ENCODE measurements at regions of chr1 and their contacts with region 1.

Region 1: GRCh38 chr1:198556971-198557370 is 16.5 kb upstream of the ATP6V1G3 start:
- DNase-seq: peak; percentile 43
- H3K4me3 Mint-ChIP-seq: peak overlapping the region; percentile 40
- H3K27ac Mint-ChIP-seq: peak overlapping the region; percentile 61
- H3K4me1 Mint-ChIP-seq: peaks cover 32% of the 10 kb centered on the region
- H3K27me3 Mint-ChIP-seq: no peaks in the 10 kb centered on the region

Region 2: DNA sequence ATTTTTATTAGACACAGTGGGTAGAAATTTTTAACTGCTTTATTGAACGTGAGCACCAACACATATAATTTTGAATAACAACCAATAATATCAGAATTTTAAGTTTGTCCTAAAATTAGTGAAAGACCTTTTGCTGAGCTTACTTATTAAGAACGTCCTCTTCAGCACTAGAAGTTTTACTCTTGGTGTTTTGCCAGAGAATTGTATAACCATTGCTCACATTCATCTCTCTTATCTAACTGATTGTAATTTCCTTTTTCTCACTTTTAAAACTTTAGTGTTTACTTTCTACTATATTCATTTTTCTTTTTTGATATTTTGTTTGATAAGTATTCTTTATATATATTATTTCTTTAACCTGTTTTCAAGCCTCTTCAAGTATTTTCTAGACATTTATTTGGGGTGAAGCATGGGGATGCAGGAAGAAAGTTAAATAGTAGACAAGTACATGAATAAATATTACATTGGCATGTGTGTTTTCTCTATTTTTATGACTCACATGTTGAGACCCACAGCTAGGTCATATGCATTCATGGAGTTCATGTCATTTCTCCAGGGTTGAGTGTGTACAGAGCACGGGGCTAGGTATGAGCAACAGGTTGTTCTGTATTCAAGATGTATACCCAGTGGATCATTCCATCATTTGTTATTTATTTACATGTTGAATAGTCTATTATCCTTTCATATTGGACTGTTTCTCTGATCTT is 107.1 kb before region 1 on chr1:
- intact Hi-C with region 1: no loop called
- DNase-seq: no peak
- H3K4me3 Mint-ChIP-seq: no peak overlapping the region
- H3K27ac Mint-ChIP-seq: no peak overlapping the region
- H3K4me1 Mint-ChIP-seq: no peaks in the 10 kb centered on the region
- H3K27me3 Mint-ChIP-seq: peaks cover 3% of the 10 kb centered on the region

Region 3: DNA sequence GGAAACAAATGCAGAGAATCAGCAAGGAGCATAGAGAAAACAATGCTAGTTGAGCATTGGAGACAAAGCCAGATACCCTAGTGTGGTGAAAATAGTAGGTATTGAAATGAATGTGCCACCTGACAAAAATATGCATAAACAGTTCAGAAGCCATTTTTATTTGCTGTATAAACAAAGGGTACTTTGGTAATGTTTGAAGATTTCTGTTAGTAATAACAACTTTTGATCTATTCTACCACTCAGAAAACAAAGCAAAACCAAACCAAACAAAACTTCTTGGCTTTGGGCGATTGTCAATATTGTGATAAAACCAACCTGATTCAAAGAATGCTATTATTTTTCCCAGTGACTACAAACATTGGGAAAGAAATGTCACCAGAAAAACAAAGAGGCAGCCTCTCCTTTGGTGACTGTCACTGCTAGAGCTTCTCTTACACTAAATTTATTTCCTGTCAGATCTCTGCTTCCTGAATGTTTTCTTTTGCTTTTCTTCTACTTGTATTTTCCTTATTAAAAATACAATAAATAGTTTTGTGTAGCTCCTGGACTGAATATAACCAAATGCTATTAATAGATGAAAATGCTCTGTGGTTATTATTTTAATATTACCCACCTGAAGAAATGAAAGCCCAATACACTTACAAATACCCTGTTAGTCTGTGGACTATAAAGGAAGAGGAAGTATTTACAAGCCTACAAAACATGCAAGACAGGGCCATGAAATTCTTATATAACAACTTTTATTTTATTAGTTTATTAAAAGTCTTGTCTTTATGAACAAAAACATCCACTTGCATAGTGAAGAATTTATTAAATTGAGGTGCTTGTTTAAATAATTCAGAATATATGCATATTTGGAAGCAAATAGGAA is 22.2 kb before region 1 on chr1:
- intact Hi-C with region 1: loop called (anchors 2 kb)
- DNase-seq: no peak
- H3K4me3 Mint-ChIP-seq: peak overlapping the region; percentile 41
- H3K27ac Mint-ChIP-seq: peak overlapping the region; percentile 6
- H3K4me1 Mint-ChIP-seq: peaks cover 50% of the 10 kb centered on the region
- H3K27me3 Mint-ChIP-seq: no peaks in the 10 kb centered on the region

Region 4: DNA sequence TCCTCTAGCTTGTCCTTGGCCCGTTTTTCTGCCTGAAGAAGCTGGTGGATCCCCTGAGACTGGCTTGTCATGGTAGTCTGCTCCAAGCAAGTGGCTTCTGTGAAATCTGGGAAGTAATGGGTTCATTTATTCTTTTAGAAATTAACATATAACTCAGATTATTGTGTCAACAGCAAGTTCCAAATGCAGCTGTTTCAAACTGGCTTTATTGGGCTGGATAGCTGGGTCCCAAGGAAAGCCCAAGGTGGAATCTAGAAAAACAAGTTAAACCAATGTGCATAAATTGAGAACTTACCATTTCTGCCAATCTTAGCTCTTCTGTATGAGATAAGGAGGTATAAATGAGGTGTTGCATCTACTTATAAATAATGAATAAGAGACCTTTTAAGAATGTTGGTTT is 16.4 kb before region 1 on chr1 and contains the start of gene ATP6V1G3:
- intact Hi-C with region 1: loop called (anchors 2 kb)
- DNase-seq: no peak
- H3K4me3 Mint-ChIP-seq: no peak within 1 kb of the TSS
- H3K27ac Mint-ChIP-seq: no peak within 1 kb of the TSS
- H3K4me1 Mint-ChIP-seq: peaks cover 47% of the 10 kb centered on the region
- H3K27me3 Mint-ChIP-seq: no peaks in the 10 kb centered on the region
- total RNA-seq, gene ATP6V1G3: not detected in 2 replicates

Region 5: GRCh38 chr1:198601936-198602889 is 45.2 kb after region 1 on chr1:
- intact Hi-C with region 1: loop called (anchors 2 kb)
- DNase-seq: no peak
- H3K4me3 Mint-ChIP-seq: no peak overlapping the region
- H3K27ac Mint-ChIP-seq: peak overlapping the region; percentile 62
- H3K4me1 Mint-ChIP-seq: peaks cover 61% of the 10 kb centered on the region
- H3K27me3 Mint-ChIP-seq: no peaks in the 10 kb centered on the region